HEK293 (cell line): ENCODE measurements at regions of chr1 and their contacts with region 1.

Region 1: GRCh38 chr1:86741947-86742572 is 37.7 kb downstream of the SH3GLB1 start:
- H3K4me3 ChIP-seq: no peak overlapping the region
- H3K27ac ChIP-seq: no peak overlapping the region
- H3K4me1 ChIP-seq: no peaks in the 10 kb centered on the region
- CTCF ChIP-seq: no peak

Region 2: DNA sequence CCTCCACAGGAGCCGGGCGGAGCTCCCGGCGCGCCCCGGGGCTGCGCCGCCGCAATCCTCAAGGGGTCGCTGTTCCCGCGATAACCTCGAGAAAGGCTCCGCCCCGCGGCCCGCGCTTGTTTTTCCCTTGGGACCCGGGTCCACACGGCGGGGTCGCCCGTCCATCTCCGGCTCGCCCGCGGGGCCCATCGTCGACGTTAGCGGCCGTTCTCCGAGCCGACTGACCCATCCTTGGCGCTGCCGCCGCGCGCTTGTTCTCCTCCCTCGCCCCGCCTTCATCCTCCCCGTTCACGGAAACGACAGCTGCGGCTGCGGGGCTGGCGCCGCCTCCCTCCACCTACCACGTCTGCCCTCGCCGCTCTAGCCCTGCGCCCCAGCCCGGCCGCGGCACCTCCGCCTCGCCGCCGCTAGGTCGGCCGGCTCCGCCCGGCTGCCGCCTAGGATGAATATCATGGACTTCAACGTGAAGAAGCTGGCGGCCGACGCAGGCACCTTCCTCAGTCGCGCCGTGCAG is 37.5 kb before region 1 on chr1 and contains the start of gene SH3GLB1:
- CTCF ChIA-PET with region 1: interaction called, 12 read pairs
- POLR2A ChIA-PET with region 1: no interaction called
- H3K4me3 ChIP-seq: peak within 1 kb of the TSS; percentile 91
- H3K27ac ChIP-seq: peak within 1 kb of the TSS; percentile 98
- H3K4me1 ChIP-seq: peaks cover 4% of the 10 kb centered on the region; the same call in 1 of the 2 replicates
- CTCF ChIP-seq: peak; percentile 96

Region 3: DNA sequence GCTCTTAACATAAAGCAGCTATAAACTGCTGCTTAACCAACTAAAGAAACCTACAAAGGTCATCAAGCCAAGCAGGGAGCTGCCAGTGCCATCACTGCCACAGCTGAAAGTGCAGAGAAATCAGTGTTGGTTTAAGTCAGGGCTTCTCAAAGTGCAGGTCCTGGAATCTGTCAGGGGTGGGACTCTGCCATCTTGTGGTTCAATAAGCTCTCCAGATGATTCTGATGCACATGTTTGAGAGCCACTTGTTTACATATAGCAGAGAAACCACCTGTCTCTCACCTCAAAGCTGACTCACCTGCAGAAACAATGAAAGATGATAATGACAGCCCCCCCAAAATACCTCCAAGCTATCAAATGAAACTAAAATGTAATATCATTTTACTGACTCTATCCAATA is 11.6 kb after region 1 on chr1:
- CTCF ChIA-PET with region 1: interaction called, 11 read pairs
- POLR2A ChIA-PET with region 1: no interaction called
- H3K4me3 ChIP-seq: no peak overlapping the region
- H3K27ac ChIP-seq: no peak overlapping the region
- H3K4me1 ChIP-seq: peaks cover 21% of the 10 kb centered on the region
- CTCF ChIP-seq: peak; percentile 67